ENCODE measurements at regions of chr2 and their contacts with region 1.

Region 1: DNA sequence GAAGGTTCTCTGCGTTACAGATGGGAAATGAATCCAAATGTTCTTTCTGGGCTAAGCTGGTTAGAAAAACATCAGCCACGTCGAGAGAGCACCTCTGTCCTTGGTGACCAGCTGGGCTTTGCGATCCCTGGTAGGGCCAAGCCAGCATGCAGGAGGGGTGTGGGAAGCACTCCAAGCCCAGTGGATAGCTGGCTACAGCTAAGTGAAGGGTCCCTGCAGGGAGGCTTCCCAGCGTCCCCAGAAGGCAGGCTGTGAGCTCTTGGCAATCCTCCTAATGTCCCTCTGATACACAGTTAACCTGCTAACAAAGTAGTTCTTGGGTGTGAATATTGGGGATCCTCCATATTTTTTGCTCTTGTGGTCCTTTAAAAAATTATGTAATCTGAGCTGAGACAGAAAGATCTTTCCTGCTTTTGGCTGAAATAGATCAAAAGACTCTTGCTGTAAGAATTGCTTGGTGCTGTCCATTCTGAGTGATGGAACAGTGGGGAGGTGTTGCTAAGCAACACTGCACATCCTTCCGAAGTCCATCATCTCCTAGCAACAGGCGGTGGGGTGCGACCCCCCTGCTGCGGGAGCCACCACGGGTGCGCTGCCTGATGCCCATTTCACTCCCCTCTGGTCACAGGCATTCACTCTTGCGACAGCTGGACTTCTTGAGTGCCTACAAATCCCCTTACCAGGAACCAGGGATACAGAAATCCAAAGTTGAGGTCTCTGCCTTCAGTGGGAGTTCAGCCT is 88.5 kb upstream of the UXS1 start:
- DNase-seq: no peak
- ATAC-seq: no peak
- H3K4me3 ChIP-seq: no peak overlapping the region
- H3K27ac ChIP-seq: no peak overlapping the region
- H3K4me1 ChIP-seq: no peaks in the 10 kb centered on the region
- H3K27me3 ChIP-seq: no peaks in the 10 kb centered on the region
- CTCF ChIP-seq: no peak
- POLR2A ChIP-seq: no peak
- RAD21 ChIP-seq: no peak

Region 2: DNA sequence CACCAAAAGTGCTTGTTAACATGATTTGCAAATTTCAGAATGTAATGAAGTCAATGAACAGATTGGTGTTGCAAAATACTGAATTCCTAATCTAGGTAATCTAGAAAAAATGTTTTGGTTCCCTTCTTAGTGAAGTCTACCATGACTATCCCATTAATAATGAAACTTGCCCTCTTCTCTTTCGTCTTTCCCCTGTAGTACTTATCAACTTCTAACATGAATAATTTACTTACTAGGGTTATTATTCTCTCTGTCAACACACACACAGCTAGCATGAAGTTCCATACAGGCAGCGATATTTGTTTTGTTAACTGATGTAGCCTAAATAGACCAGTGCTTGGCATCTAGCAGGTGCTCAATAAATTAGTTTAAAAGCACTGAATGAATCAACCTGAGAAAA is 377.7 kb before region 1 on chr2:
- CTCF ChIA-PET with region 1: no interaction called
- POLR2A ChIA-PET with region 1: no interaction called
- RAD21 ChIA-PET with region 1: no interaction called
- intact Hi-C with region 1: loop called (anchors 5 kb)
- DNase-seq: no peak
- ATAC-seq: no peak
- H3K4me3 ChIP-seq: no peak overlapping the region
- H3K27ac ChIP-seq: no peak overlapping the region
- H3K4me1 ChIP-seq: no peaks in the 10 kb centered on the region
- H3K27me3 ChIP-seq: no peaks in the 10 kb centered on the region
- CTCF ChIP-seq: no peak
- POLR2A ChIP-seq: no peak
- RAD21 ChIP-seq: no peak

Region 3: DNA sequence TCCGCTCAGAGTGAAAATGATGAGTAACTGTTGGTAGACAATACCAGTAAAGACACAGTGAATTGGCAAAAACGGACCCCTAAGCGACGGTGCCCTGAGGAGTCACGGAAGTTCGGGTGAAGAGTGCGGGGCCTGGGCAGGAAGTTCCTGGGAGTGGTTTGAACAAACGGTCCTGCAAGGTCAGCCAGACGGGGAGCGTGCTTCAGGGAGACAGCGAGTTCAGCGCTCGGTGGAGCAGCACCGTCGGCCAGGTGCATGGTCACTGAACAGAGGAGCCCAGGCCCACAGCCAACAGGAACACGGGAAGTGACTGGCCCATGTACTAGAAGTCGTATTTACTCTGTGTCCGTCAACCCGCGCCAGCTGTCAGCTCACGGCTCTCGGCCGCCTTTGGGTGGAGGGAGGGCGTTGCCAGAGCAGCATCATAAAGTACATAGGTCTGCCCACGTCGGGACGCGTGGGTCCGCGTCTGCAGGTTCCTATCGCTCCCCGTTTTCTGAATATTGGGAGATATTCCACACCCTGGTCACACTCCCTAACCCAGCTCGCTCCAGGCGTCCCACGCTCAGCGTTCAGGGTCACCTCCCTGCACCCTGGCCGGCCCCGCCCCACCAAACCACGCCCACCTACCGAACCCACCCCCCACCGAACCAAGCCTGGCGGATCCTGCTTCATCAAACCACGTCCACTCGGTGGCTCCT is 12.9 kb before region 1 on chr2:
- CTCF ChIA-PET with region 1: no interaction called
- POLR2A ChIA-PET with region 1: no interaction called
- RAD21 ChIA-PET with region 1: no interaction called
- intact Hi-C with region 1: no loop called
- DNase-seq: no peak
- ATAC-seq: peak; percentile 81
- H3K4me3 ChIP-seq: peak overlapping the region; percentile 21 to 47; a peak in 3 of 4 replicates
- H3K27ac ChIP-seq: no peak overlapping the region
- H3K4me1 ChIP-seq: peaks cover 0 to 10% of the 10 kb centered on the region in 2 experiments; a peak in 1 of 4 replicates
- H3K27me3 ChIP-seq: no peaks in the 10 kb centered on the region
- CTCF ChIP-seq: no peak
- POLR2A ChIP-seq: no peak
- RAD21 ChIP-seq: no peak